ENCODE measurements at regions of chr16 and their contacts with region 1.

Region 1: GRCh38 chr16:31142109-31143010 is 6.8 kb upstream of the PRSS8 start:
- DNase-seq: peak; percentile 98
- H3K4me3 Mint-ChIP-seq: peak overlapping the region; percentile 78
- H3K27ac Mint-ChIP-seq: peak overlapping the region; percentile 88
- H3K4me1 Mint-ChIP-seq: peaks cover 12% of the 10 kb centered on the region
- H3K27me3 Mint-ChIP-seq: peaks cover 13% of the 10 kb centered on the region

Region 2: DNA sequence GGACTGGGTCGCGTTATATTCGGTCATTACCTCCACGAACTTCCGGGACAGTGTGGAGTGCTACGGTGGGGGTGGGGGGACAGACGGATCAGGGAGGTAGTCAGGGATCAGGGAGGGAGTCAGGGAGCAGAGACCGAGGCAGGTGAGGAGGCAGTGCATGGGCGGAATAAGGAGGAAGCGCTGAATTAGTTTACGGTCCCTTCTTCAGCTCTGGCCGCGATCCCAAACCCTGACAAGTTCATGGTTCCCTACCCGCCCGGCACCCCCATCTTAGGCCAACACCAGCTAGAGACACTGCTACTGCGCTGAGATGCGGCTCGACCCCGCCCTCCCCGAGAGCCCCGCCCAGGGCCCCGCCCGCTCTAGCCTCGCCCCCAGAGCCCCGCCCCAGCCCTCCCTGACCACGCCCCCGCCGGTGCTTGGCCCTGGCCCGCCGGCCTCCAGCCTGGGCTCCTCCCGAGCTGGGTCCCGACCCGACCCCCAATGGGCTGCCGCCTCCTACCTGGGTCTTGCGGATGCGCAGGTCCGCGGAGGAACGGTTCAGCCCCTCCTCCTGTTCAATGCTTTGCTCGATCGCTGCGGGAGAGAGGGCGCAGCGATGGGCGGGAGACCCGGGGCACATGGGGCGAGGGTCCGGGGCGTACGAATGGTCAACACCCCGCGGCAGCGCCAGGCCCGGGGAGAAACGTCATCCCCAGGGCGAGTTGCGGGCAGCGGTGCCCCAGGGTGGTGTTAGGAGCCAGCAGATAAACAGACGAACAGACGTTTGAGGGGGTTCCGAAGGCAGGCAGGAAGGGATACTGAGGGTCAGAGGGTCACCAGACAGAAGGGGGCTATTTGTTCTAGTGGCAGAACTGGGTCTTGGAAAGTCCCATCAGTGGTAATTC is 145.1 kb before region 1 on chr16:
- intact Hi-C with region 1: loop called (anchors 1 kb)
- DNase-seq: peak; percentile 66
- H3K4me3 Mint-ChIP-seq: peak overlapping the region; percentile 74
- H3K27ac Mint-ChIP-seq: peak overlapping the region; percentile 44
- H3K4me1 Mint-ChIP-seq: peaks cover 11% of the 10 kb centered on the region
- H3K27me3 Mint-ChIP-seq: peaks cover 18% of the 10 kb centered on the region

Region 3: DNA sequence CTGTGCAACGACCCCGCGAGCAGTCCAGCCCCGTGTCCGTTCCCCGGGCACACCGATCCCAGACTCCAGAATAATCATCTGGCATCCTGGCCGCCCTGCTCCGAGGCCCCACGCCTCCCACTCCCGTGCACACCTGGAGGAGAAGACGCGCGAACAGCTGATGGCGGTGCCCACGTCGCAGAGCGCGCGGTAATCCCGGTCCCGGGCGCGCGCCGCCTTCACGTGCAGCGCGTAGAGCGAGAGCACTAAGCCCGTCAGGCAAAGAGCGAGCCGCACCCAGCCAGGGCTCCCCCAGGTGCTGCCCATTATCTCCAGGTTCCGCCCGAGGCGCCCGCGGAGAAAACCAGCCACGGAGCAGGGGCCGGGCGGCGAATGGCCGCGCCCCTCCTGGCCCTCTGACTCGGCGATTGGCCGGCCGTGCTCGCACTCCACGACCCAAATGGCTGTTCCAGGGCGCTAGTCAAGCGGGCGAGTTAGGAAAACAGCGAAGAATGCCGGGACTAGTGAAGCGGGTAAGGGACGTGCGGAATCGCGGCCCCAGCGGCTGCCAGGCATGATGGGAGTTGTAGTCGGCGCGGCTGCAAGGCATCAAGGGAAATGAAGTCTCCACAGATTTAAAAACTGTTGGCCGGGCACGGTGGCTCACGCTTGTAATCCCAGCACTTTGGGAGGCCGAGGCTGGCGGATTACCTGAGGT is 47.8 kb before region 1 on chr16 and contains the start of gene VKORC1:
- intact Hi-C with region 1: loop called (anchors 1 kb)
- DNase-seq: peak; percentile 84
- H3K4me3 Mint-ChIP-seq: peak within 1 kb of the TSS; percentile 95
- H3K27ac Mint-ChIP-seq: peak within 1 kb of the TSS; percentile 82
- H3K4me1 Mint-ChIP-seq: peaks cover 27% of the 10 kb centered on the region
- H3K27me3 Mint-ChIP-seq: no peaks in the 10 kb centered on the region
- total RNA-seq, gene VKORC1: 47.3 and 53.0 TPM in 2 replicates

Region 4: DNA sequence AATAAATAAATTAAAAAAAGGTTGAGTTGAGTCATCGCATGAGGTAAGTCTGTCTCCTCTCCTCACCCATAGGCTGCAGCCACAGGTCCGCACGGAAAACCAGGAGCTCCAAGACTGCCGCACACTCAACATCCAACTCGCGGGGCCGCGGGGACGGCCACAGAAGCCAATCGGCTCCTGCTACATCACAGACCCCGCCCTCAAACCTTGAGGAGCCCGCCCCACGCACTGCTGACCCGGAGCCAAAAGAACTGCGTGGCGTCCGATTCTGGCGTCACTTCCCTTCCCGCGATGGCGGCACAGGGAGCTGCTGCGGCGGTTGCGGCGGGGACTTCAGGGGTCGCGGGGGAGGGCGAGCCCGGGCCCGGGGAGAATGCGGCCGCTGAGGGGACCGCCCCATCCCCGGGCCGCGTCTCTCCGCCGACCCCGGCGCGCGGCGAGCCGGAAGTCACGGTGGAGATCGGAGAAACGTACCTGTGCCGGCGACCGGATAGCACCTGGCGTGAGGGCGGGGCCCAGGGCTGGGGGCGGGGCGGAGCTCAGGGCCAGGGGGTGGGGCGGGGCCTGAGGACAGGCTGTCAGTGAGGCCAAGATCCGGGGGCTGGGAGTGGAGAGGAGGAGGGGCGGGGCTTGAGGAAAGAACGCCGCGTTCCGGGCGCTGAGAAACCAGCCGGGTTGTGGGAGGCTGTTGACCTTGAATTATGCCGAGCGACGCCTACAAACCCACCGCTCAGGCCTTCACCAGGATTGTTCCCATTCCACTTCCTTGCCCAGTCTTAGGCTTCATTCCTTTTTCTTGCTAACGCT is 24.8 kb before region 1 on chr16 and contains the start of gene KAT8:
- intact Hi-C with region 1: loop called (anchors 1 kb)
- DNase-seq: peak; percentile 95
- H3K4me3 Mint-ChIP-seq: peak within 1 kb of the TSS; percentile 88
- H3K27ac Mint-ChIP-seq: peak within 1 kb of the TSS; percentile 92
- H3K4me1 Mint-ChIP-seq: peaks cover 19% of the 10 kb centered on the region
- H3K27me3 Mint-ChIP-seq: no peaks in the 10 kb centered on the region
- total RNA-seq, gene KAT8: 55.4 and 58.2 TPM in 2 replicates

Region 5: GRCh38 chr16:31186176-31186575 is 43.8 kb after region 1 on chr16:
- intact Hi-C with region 1: no loop called
- DNase-seq: no peak
- H3K4me3 Mint-ChIP-seq: peak overlapping the region; percentile 68
- H3K27ac Mint-ChIP-seq: peak overlapping the region; percentile 62
- H3K4me1 Mint-ChIP-seq: peaks cover 95% of the 10 kb centered on the region
- H3K27me3 Mint-ChIP-seq: no peaks in the 10 kb centered on the region

Measured in activated T-helper 1 cell treated with anti-CD3 and anti-CD28 coated beads, Interleukin-12 subunit alpha, Interleukin-12 subunit beta, Interleukin-2, Interleukin-4 antibody, amounts not matched to agents 30 ng/mL and 10 ng/mL and 1 ng/mL, durations not matched to agents 14 hours and 24 hours and 36 hours (primary cell).